GM10248 (cell line): ENCODE measurements at regions of chr1 and their contacts with region 1.

Region 1: GRCh38 chr1:248622570-248623001 is 12.3 kb downstream of the OR2T11 start:
- DNase-seq: peak; percentile 66
- CTCF ChIP-seq: peak; percentile 58

Region 2: DNA sequence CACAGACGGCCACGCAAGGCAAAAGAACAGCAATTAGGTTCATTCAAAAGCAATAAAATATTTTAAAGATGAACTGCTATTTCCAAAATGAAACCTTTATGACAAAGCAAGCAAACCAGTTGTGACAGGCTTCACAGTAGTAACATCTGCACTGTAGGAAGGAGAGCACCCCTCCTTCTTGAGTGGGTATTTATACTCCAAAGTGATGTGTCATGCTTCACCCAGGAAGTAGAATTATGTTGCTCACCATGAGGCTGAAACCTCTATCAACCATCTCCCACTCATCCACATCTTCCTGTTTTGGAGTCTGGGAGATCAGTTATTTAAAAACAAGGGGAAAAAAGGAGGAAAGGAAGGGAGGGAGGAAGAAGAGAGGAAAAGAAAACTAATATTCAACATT is 26.0 kb before region 1 on chr1:
- CTCF ChIA-PET with region 1: no interaction called
- POLR2A ChIA-PET with region 1: no interaction called
- DNase-seq: no peak
- CTCF ChIP-seq: no peak

Region 3: DNA sequence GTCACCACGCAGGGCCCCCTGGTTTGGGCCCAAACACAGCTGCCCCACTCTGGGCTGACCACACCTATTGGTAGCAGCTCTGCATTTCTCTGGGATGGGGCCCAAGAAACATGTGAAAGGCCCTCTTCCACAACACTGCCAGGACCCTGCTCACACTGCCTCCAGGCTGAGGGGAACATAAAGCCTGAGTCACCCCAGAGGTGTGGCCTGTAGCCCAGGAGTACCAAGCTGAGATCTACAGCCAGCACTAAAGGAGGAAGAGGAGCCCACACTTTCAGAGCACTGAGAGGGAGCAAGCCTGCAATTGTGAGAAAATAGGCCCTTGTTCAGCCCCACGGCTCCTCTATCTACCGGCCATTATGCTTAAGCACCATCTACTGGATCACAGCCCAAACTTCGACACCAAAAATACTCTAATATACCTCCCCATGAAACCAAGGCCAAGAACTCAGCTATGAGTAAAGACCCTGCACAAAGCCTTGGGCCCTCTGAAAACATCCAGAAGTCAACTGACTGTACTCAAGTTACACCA is 10.6 kb before region 1 on chr1:
- CTCF ChIA-PET with region 1: interaction called, 27 read pairs
- POLR2A ChIA-PET with region 1: no interaction called
- DNase-seq: no peak
- CTCF ChIP-seq: no peak

Region 4: DNA sequence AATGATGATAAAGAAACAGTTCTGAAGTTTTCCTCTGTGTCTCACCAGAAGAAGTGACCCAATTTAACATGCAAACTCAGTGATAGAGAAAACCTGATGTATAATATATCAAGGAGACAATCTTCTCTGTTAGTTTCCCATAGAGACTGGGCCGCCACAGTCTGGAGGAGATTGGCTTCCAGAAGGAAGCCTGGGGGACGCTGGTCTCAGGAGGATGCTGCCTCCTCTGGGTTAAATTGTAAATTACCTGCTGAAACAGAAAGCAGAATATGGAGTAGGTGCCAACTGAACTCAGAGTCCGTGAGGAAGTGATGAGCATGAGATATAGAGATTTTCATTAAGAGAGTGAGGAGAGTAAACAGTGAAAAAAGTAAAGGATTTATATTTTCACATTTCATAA is 64.2 kb after region 1 on chr1:
- CTCF ChIA-PET with region 1: interaction called, 34 read pairs
- POLR2A ChIA-PET with region 1: no interaction called
- DNase-seq: peak; percentile 53
- CTCF ChIP-seq: peak; percentile 59